Dendritic cell treated with granulocyte-macrophage colony-stimulating factor and Interleukin-4, amounts not matched to agents 40 ng/mL and 50 ng/mL, for 4 days (primary cell): ENCODE measurements at regions of chr1 and their contacts with region 1.

Region 1: GRCh38 chr1:8283058-8283884 is 34.6 kb upstream of the SLC45A1 start:
- H3K4me3 Mint-ChIP-seq: peak overlapping the region; percentile 64
- H3K27ac Mint-ChIP-seq: peak overlapping the region; percentile 97
- H3K4me1 Mint-ChIP-seq: peaks cover 34% of the 10 kb centered on the region
- H3K27me3 Mint-ChIP-seq: peaks cover 10% of the 10 kb centered on the region

Region 2: GRCh38 chr1:8104278-8105236 is 178.7 kb before region 1 on chr1:
- intact Hi-C with region 1: loop called (anchors 10 kb)
- H3K4me3 Mint-ChIP-seq: no peak overlapping the region
- H3K27ac Mint-ChIP-seq: peak overlapping the region; percentile 65
- H3K4me1 Mint-ChIP-seq: peaks cover 28% of the 10 kb centered on the region
- H3K27me3 Mint-ChIP-seq: peaks cover 3% of the 10 kb centered on the region